Transverse colon (tissue), 4 donors: ENCODE measurements at regions of chr17 and their contacts with region 1.

Region 1: DNA sequence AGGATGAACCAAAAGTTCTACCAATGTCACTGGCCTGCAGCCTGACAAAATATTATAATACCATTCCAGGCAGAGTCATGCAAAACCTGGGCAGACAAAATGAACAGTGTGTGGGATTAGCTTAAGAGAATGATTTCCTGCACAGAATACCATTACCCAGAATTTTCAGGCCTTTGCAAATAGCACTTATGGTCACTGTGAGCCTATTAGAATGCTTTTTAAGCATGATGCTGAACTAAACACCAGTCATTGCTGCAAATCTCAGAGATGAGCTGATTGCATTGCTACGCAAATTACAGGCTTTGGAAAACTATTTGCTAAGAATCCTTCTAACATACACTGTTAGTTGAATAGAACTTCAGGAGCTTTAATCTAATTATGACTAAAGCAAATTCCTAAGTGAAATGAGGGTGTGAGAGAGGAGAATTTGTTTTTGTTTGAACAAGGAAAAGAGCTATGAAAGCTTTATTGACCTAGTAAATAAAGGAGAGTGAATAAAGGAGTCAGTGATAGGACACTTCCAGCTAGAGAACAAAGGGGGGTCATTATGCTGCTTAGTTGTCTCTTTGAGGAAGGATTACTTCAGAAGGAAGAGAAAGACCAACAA is 398.8 kb downstream of the HS3ST3B1 start:
- DNase-seq: no peak
- H3K4me3 ChIP-seq: no peak overlapping the region
- H3K27ac ChIP-seq: no peak overlapping the region
- H3K4me1 ChIP-seq: no peaks in the 10 kb centered on the region
- H3K27me3 ChIP-seq: no peaks in the 10 kb centered on the region
- CTCF ChIP-seq: no peak
- EP300 ChIP-seq: no peak
- POLR2A ChIP-seq: no peak

Region 2: GRCh38 chr17:14762736-14763479 is 63.2 kb after region 1 on chr17:
- in situ Hi-C with region 1: no loop called
- intact Hi-C with region 1: loop called (anchors 2 kb)
- DNase-seq: no peak
- H3K4me3 ChIP-seq: no peak overlapping the region
- H3K27ac ChIP-seq: no peak overlapping the region
- H3K4me1 ChIP-seq: no peaks in the 10 kb centered on the region
- H3K27me3 ChIP-seq: no peaks in the 10 kb centered on the region
- CTCF ChIP-seq: no peak
- EP300 ChIP-seq: no peak
- POLR2A ChIP-seq: no peak

Region 3: GRCh38 chr17:15233022-15233805 is 533.5 kb after region 1 on chr17:
- in situ Hi-C with region 1: no loop called
- intact Hi-C with region 1: no loop called
- DNase-seq: no peak
- H3K4me3 ChIP-seq: no peak overlapping the region
- H3K27ac ChIP-seq: no peak overlapping the region
- H3K4me1 ChIP-seq: peaks cover 7 to 20% (median 14%) of the 10 kb centered on the region in 4 donors
- H3K27me3 ChIP-seq: no peaks in the 10 kb centered on the region
- CTCF ChIP-seq: peak in 1 of 5 experiments; percentile 11
- EP300 ChIP-seq: no peak
- POLR2A ChIP-seq: no peak